ENCODE measurements at regions of chr22 and their contacts with region 1.

Region 1: GRCh38 chr22:40651563-40652501 is 15.3 kb upstream of the MRTFA start:
- DNase-seq: peak; percentile 91 to 95
- ATAC-seq: peak; percentile 97 to 98
- H3K4me3 ChIP-seq: peak overlapping the region; percentile 75
- H3K27ac ChIP-seq: peak overlapping the region; percentile 96 to 98
- H3K4me1 ChIP-seq: peaks cover 31% of the 10 kb centered on the region
- CTCF ChIP-seq: no peak
- EP300 ChIP-seq: no peak
- POLR2A ChIP-seq: peak; percentile 22
- RAD21 ChIP-seq: no peak

Region 2: DNA sequence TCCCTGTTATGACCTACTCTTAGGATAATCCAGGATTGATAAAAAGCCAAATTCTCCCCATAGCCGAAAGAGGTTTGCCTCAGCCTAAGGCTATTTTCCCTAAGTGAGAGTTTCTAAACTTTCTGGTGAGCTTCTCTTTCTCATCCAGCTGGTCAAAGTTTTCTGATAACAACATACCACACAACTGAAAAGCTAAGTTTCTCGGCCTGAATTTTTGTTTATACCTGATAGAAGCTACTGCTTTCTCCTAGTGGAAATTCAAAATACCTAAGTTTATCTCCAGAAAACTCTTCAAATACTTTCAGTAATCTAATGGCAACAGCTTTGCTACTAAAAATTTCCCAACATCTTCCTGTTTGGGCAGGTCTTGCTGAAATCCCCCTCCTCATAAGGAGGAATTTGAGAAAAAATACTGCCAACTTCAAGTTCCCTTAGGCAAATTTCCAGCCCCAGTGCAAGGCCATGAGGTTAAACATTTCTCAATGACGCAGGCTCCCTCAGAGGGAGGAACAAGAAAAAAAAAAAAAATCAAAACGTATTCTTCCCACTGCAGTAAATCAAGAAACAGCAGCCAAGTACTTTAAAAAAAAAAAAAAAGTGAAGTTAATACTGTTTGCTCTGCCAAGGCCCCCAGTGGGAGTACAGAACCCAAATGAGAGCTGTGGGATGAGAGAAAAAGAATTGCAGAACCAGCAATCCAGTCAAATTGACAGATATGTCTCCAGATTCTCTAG is 142.3 kb before region 1 on chr22:
- CTCF ChIA-PET with region 1: interaction called, 15 read pairs
- POLR2A ChIA-PET with region 1: interaction called, 11 read pairs
- DNase-seq: peak in 1 of 2 experiments; percentile 94
- ATAC-seq: peak; percentile 41 to 61; a peak in 5 of 6 replicates
- H3K4me3 ChIP-seq: no peak overlapping the region; the same call in 2 of the 3 replicates
- H3K27ac ChIP-seq: peak overlapping the region; percentile 94 to 99
- H3K4me1 ChIP-seq: peaks cover 92% of the 10 kb centered on the region
- CTCF ChIP-seq: no peak
- EP300 ChIP-seq: peak; percentile 91 to 96; a peak in 4 of 5 replicates
- POLR2A ChIP-seq: no peak
- RAD21 ChIP-seq: peak; percentile 2 to 6; a peak in 3 of 5 replicates

Region 3: DNA sequence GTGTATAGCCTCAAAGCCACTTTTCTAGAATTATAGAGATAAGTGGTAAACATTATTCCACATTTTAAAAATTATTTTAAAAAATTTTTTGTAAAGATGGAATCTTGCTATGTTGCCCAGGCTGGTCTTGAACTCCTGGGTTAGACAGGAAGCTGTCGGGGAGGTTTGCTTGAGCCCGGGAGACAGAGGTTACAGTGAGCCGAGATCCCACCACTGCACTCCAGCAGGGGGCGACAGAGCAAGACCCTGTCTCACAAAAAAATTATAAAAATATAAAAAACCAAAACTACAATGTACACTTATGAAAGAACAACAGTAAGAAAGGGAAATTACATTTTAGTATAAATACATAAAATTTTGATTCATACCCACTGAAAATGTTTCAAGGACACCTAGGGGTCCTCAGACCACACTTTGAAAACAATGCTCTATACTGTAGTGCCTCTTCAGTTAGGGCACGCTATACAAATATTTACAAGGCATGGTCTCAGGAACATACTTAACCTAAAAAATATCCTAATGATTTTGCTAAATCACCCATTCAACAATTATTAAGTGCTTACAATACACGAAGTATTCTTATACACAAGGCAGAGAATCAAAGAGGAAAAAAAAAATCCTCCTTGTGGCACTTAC is 126.5 kb before region 1 on chr22:
- CTCF ChIA-PET with region 1: interaction called, 87 read pairs
- POLR2A ChIA-PET with region 1: interaction called, 6 read pairs
- DNase-seq: peak in 1 of 2 experiments; percentile 65
- ATAC-seq: peak; percentile 39 to 75; a peak in 3 of 6 replicates
- H3K4me3 ChIP-seq: no peak overlapping the region
- H3K27ac ChIP-seq: peak overlapping the region; percentile 68 to 85
- H3K4me1 ChIP-seq: peaks cover 78% of the 10 kb centered on the region
- CTCF ChIP-seq: peak; percentile 65
- EP300 ChIP-seq: no peak
- POLR2A ChIP-seq: no peak
- RAD21 ChIP-seq: peak; percentile 42 to 55

Region 4: GRCh38 chr22:40541300-40541699 is 110.5 kb before region 1 on chr22:
- CTCF ChIA-PET with region 1: no interaction called
- POLR2A ChIA-PET with region 1: no interaction called
- DNase-seq: no peak
- ATAC-seq: peak in 1 of 2 experiments; percentile 24; a peak in 1 of 6 replicates
- H3K4me3 ChIP-seq: no peak overlapping the region
- H3K27ac ChIP-seq: peak overlapping the region; percentile 21 to 33; a peak in 4 of 6 replicates
- H3K4me1 ChIP-seq: peaks cover 36% of the 10 kb centered on the region
- CTCF ChIP-seq: no peak
- EP300 ChIP-seq: no peak
- POLR2A ChIP-seq: no peak
- RAD21 ChIP-seq: no peak

Region 5: DNA sequence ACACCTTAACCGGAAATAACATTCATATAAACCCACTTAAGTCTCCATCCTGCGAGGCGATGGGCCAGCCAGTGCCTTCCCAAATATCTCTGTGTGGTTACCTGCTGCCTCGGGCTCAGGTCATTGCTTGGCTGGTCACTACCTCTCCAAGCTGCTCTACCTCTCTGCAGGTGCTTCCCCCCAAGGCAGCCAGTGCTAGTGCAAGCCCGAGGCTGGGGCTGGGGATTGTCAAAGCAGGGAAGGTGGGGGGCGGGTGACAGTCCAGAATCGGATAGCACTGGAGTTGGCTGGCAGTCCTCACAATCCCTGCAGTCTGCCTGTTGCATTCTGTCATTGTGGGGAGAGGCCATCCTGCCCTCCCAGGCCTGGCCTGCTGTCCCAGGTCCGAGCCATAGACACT is 38.5 kb after region 1 on chr22:
- CTCF ChIA-PET with region 1: no interaction called
- POLR2A ChIA-PET with region 1: no interaction called
- DNase-seq: no peak
- ATAC-seq: no peak; a peak in 1 of 6 replicates
- H3K4me3 ChIP-seq: no peak overlapping the region
- H3K27ac ChIP-seq: no peak overlapping the region
- H3K4me1 ChIP-seq: no peaks in the 10 kb centered on the region
- CTCF ChIP-seq: no peak
- EP300 ChIP-seq: no peak
- POLR2A ChIP-seq: no peak
- RAD21 ChIP-seq: no peak

Region 6: DNA sequence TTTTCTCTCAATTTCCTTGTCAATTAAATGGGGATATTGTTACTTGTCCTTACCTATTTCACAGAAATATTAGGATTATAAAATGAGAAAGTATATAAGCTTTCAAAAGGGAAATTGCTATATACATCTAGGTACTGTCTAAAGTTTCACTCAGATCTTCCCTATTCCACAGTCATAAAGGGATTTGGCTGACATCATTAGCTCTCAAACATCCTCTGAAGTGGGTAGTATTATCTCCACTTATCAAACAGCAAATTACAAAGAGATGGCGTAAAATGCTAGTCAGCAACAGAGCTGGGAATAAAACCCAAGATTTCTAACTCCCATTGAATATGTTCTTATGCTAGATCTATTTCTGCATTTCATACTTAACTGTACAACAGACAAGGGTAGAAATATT is 116.4 kb after region 1 on chr22:
- CTCF ChIA-PET with region 1: no interaction called
- POLR2A ChIA-PET with region 1: no interaction called
- DNase-seq: no peak
- ATAC-seq: no peak
- H3K4me3 ChIP-seq: no peak overlapping the region
- H3K27ac ChIP-seq: no peak overlapping the region
- H3K4me1 ChIP-seq: no peaks in the 10 kb centered on the region
- CTCF ChIP-seq: no peak
- EP300 ChIP-seq: no peak
- POLR2A ChIP-seq: no peak
- RAD21 ChIP-seq: no peak